Mammary epithelial cell (primary cell): ENCODE measurements at regions of chr14 and their contacts with region 1.

Region 1: GRCh38 chr14:54488646-54489317 is at the start of gene GMFB:
- DNase-seq: peak; percentile 95
- H3K4me3 ChIP-seq: peak within 1 kb of the TSS; percentile 91 to 97 (median 96)
- H3K27ac ChIP-seq: peak within 1 kb of the TSS; percentile 96
- H3K4me1 ChIP-seq: peaks cover 17% of the 10 kb centered on the region
- H3K27me3 ChIP-seq: no peaks in the 10 kb centered on the region
- CTCF ChIP-seq: peak; percentile 46 to 67
- total RNA-seq, gene GMFB: 65.9 to 104 TPM

Region 2: DNA sequence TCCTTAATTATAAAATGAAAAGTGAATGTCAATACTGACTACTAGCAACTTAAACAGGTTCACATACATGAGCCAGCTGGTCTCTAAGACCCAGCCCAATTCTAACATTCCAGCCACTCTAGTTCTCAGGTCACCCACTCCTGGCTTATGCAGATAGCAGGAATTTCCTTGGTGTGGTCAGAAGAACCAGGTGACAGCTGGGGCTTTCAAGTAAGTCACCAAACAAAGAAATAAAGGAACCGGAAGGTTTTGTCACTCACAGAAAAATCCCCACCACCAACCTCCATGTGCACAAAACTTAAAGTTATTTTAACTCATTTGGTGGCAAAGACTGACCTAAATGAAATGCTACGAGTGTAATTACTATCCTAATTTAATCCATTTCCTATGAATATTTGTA is 221.6 kb before region 1 on chr14:
- CTCF ChIA-PET with region 1: no interaction called
- dilution Hi-C with region 1: no loop called
- in situ Hi-C with region 1: no loop called
- intact Hi-C with region 1: no loop called
- DNase-seq: no peak
- H3K4me3 ChIP-seq: no peak overlapping the region
- H3K27ac ChIP-seq: no peak overlapping the region
- H3K4me1 ChIP-seq: no peaks in the 10 kb centered on the region
- H3K27me3 ChIP-seq: no peaks in the 10 kb centered on the region
- CTCF ChIP-seq: no peak

Region 3: DNA sequence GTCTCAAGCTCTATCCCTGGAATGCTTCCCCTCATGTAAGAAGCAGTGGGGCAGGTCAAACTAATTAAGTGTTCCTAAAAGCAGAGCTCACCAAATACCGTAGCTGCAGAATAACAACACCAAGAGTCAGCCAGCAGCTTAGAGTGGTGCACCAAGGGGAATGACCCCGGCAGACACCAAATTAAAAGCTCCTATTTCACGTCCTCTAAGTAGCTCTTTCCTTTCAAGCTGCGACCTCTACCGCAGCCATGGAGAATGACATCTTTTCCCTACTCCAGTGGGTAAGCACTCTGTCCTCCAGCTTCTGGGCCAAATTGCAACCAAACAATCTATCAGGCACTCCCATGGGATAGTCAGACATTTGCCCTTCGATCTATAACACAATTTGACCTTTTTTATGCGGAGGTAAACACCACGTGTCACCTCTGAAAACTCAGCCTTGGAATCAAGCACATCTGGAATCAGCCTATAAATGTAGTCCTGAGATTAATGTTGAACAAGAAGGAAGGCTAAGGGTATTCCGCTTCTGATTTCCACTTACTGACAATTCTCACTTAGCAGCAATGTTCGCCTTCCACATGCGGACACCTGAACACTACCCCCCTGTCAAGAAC is 159.6 kb before region 1 on chr14:
- CTCF ChIA-PET with region 1: no interaction called
- dilution Hi-C with region 1: no loop called
- in situ Hi-C with region 1: no loop called
- intact Hi-C with region 1: no loop called
- DNase-seq: peak; percentile 51
- H3K4me3 ChIP-seq: no peak overlapping the region
- H3K27ac ChIP-seq: no peak overlapping the region
- H3K4me1 ChIP-seq: peaks cover 10% of the 10 kb centered on the region
- H3K27me3 ChIP-seq: no peaks in the 10 kb centered on the region
- CTCF ChIP-seq: peak; percentile 88 to 94

Region 4: DNA sequence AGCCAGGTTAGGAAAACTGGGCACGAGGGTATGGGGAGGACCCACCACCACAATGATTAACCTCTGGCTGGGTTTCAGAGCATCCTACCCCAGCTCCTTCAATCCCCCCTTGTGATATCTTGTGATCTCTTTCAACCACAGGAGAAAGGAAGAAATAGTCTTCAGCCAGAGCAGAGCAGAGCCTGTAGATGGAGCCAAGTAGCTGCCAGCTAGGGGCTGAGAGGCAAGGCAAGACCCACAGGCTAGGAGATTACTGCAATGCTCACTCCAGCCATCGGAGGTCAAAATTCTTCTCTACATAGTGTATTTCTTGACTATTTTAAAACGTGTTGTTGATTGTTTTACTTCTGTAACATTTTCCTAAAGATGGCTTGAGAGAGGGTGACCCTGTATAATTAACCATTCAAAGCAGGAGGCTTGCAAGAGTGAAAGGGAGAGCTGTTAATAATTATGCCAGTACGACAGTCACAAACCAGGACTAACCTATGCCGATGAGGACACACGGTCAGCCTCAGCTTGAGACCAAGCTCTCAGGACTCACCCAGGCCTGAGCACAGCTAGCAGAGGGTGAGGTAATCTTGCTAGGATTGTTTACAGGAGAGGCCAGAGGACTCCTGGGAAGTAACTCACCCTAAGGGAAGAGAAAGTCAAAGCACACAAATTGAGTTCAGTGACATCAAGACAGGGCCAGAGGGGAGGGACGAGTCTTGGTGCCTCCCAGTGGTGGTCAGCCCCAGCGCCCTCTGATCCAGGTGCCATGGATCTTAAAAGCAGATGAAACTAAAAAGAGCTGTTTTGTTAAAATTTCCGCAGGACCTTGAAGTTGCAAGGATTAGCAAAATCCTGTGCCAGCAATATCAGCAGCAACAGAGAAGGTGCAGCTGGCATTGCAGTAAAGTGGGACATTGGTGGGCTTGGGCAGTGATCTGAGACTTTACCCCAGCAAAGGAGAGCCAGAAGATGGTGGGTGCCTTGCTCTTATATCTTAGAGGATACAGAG is 121.7 kb before region 1 on chr14:
- CTCF ChIA-PET with region 1: no interaction called
- dilution Hi-C with region 1: no loop called
- in situ Hi-C with region 1: no loop called
- intact Hi-C with region 1: loop called (anchors 2 kb)
- DNase-seq: peak; percentile 44
- H3K4me3 ChIP-seq: no peak overlapping the region
- H3K27ac ChIP-seq: no peak overlapping the region
- H3K4me1 ChIP-seq: peaks cover 9% of the 10 kb centered on the region
- H3K27me3 ChIP-seq: no peaks in the 10 kb centered on the region
- CTCF ChIP-seq: peak; percentile 54 to 69

Region 5: DNA sequence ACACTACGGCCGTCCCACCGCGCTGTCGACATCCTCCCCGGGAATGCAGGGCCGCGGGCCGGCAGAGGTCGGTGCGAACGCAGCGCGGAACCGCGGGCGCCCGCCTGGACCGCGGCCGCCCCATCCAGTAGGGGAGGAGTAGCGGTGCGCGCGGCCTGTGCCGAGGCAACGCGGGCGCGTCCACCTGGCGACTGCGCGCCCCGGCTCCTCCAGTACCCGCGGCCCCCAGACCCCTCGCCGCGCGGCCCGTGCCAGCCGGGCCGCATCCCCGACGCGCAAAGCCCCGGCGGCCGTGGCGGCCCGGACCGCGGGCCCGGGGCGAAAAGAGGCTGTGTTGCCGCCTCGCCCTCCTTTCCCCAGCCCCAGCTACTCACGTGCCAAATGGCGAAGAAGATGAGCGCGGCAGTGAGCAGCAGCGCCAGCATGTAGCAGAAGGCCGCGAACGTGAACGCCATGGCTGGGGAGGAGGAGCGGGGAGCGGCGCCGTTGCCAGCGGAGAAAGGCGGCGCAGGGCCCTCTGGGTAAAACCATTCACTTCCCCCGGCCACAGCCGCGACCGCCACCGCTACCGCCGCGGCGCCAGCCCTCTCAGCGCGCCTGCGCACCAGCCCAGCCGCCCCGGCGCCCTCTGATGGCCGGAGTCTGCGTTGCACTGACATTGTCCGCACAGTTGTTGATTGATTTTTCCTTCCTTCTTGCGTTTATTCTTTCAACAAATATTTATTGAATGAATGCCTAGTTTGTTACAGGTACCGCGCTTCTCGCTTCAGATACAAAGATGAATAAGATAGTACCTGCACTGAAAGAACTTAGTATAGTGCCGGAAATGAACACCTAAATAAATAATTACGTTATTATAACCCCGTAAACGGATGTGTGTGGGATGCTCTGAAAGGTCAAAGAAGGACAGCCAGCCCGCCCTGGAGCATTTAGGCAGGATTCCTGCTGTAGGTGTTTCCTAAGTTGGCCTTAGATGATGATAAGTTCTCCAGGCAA is 47.6 kb before region 1 on chr14 and contains the start of gene CNIH1:
- CTCF ChIA-PET with region 1: no interaction called
- dilution Hi-C with region 1: no loop called
- in situ Hi-C with region 1: no loop called
- intact Hi-C with region 1: loop called (anchors 1 kb)
- DNase-seq: peak; percentile 91
- H3K4me3 ChIP-seq: peak within 1 kb of the TSS; percentile 65 to 78 (median 76)
- H3K27ac ChIP-seq: peak within 1 kb of the TSS; percentile 90
- H3K4me1 ChIP-seq: peaks cover 29% of the 10 kb centered on the region
- H3K27me3 ChIP-seq: no peaks in the 10 kb centered on the region
- CTCF ChIP-seq: peak; percentile 85 to 92
- total RNA-seq, gene CNIH1: 184 to 196 TPM

Region 6: GRCh38 chr14:54472315-54472714 is 16.5 kb before region 1 on chr14:
- CTCF ChIA-PET with region 1: no interaction called
- dilution Hi-C with region 1: no loop called
- in situ Hi-C with region 1: no loop called
- intact Hi-C with region 1: no loop called
- DNase-seq: no peak
- H3K4me3 ChIP-seq: no peak overlapping the region
- H3K27ac ChIP-seq: no peak overlapping the region
- H3K4me1 ChIP-seq: no peaks in the 10 kb centered on the region
- H3K27me3 ChIP-seq: no peaks in the 10 kb centered on the region
- CTCF ChIP-seq: no peak

Region 7: GRCh38 chr14:54509546-54510501 is 21.0 kb after region 1 on chr14 and contains the start of gene CGRRF1:
- CTCF ChIA-PET with region 1: no interaction called
- dilution Hi-C with region 1: no loop called
- in situ Hi-C with region 1: no loop called
- intact Hi-C with region 1: loop called (anchors 2 kb)
- DNase-seq: peak; percentile 98
- H3K4me3 ChIP-seq: peak within 1 kb of the TSS; percentile 90 to 97 (median 96)
- H3K27ac ChIP-seq: peak within 1 kb of the TSS; percentile 63
- H3K4me1 ChIP-seq: peaks cover 8% of the 10 kb centered on the region
- H3K27me3 ChIP-seq: no peaks in the 10 kb centered on the region
- CTCF ChIP-seq: peak in 1 of 2 donors; percentile 49
- total RNA-seq, gene CGRRF1: 14.3 to 16.4 TPM